PC-3 (cell line): ENCODE measurements at regions of chrX and their contacts with region 1.

Region 1: GRCh38 chrX:81286646-81287045 is 84.7 kb downstream of the SH3BGRL start:
- DNase-seq: peak; percentile 67
- ATAC-seq: peak; percentile 77
- H3K4me3 ChIP-seq: peak overlapping the region; percentile 62
- H3K27ac ChIP-seq: peak overlapping the region; percentile 100
- H3K4me1 ChIP-seq: peaks cover 21% of the 10 kb centered on the region
- H3K27me3 ChIP-seq: no peaks in the 10 kb centered on the region
- CTCF ChIP-seq: no peak

Region 2: DNA sequence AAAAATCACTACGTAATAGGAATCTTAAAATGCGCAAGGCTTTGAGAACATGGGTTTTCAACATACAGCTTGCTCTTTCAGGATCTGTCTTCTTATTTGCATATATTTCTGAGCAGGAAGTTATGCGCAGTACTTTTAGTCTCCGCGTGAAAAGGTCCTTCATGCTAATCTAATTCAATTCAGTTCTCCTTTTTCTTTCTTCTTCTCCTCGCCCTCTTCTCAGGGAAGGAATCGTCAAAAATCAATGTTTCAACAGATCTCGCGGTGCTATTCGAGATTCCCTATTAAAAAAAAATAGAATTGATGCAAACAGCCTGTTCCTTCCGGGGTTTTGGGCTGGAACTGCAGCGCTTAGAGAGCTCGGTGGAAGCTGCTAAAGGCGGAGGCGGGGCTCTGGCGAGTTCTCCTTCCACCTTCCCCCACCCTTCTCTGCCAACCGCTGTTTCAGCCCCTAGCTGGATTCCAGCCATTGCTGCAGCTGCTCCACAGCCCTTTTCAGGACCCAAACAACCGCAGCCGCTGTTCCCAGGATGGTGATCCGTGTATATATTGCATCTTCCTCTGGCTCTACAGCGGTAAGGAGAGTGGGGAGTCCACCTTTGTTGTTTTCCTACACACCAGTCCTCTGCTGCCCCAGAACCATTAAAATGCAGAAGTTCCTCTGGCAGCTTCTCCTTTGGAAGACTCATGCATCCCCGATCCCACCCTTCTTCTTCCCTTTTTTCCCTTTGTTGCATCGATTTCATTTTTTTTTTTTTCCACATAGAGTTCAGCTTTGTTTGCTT is 84.8 kb before region 1 on chrX and contains the starts of genes HMGN5 and SH3BGRL:
- CTCF ChIA-PET with region 1: no interaction called
- POLR2A ChIA-PET with region 1: no interaction called
- intact Hi-C with region 1: loop called (anchors 5 kb)
- DNase-seq: peak; percentile 79
- ATAC-seq: peak; percentile 97
- H3K4me3 ChIP-seq: peak within 1 kb of the TSS; percentile 83
- H3K27ac ChIP-seq: peak within 1 kb of the TSS; percentile 33
- H3K4me1 ChIP-seq: peaks cover 6% of the 10 kb centered on the region; the same call in 1 of the 2 replicates
- H3K27me3 ChIP-seq: no peaks in the 10 kb centered on the region
- CTCF ChIP-seq: no peak
- total RNA-seq, gene HMGN5: 0.46 and 2.9 TPM in 2 replicates
- total RNA-seq, gene SH3BGRL: 22.9 and 26.4 TPM in 2 replicates

Region 3: GRCh38 chrX:81208894-81209293 is 77.8 kb before region 1 on chrX:
- CTCF ChIA-PET with region 1: no interaction called
- POLR2A ChIA-PET with region 1: no interaction called
- intact Hi-C with region 1: loop called (anchors 1 kb)
- DNase-seq: no peak
- ATAC-seq: no peak
- H3K4me3 ChIP-seq: no peak overlapping the region
- H3K27ac ChIP-seq: no peak overlapping the region
- H3K4me1 ChIP-seq: peaks cover 17% of the 10 kb centered on the region
- H3K27me3 ChIP-seq: no peaks in the 10 kb centered on the region
- CTCF ChIP-seq: no peak

Region 4: DNA sequence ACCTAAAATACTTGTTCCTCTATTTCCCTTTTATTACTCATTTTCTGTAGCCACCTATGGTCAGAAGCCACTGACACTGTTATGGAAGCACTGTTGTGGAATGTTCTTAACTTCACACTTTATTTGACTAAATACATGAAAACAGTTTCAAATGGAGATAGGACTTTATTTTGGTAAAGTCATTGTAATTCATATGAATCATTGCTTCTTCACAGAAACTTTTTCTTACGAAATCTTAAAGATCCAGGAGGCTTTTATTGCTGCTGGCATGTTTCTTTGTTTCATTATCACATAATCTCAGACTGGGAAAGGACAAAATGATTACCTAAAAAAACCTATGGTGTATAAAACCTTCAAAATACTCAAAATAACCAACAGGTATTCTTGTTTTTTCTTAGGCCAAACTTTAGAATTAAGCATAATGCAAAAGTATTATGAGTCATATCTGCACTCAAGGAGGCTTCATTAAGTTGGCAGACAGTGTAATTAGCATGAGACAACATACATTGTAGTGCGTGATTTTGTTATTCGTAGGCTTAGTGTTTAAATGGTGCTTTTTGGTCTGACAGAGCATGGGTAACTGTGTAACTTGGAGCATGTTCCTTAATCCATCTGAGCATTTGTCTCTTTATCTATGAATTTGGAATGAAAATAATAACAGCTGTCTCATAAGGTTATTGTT is 26.8 kb before region 1 on chrX:
- CTCF ChIA-PET with region 1: no interaction called
- POLR2A ChIA-PET with region 1: no interaction called
- intact Hi-C with region 1: loop called (anchors 2 kb)
- DNase-seq: peak; percentile 19
- ATAC-seq: no peak
- H3K4me3 ChIP-seq: no peak overlapping the region
- H3K27ac ChIP-seq: no peak overlapping the region
- H3K4me1 ChIP-seq: peaks cover 39% of the 10 kb centered on the region
- H3K27me3 ChIP-seq: no peaks in the 10 kb centered on the region
- CTCF ChIP-seq: no peak